ENCODE measurements at regions of chr17 and their contacts with region 1.

Region 1: DNA sequence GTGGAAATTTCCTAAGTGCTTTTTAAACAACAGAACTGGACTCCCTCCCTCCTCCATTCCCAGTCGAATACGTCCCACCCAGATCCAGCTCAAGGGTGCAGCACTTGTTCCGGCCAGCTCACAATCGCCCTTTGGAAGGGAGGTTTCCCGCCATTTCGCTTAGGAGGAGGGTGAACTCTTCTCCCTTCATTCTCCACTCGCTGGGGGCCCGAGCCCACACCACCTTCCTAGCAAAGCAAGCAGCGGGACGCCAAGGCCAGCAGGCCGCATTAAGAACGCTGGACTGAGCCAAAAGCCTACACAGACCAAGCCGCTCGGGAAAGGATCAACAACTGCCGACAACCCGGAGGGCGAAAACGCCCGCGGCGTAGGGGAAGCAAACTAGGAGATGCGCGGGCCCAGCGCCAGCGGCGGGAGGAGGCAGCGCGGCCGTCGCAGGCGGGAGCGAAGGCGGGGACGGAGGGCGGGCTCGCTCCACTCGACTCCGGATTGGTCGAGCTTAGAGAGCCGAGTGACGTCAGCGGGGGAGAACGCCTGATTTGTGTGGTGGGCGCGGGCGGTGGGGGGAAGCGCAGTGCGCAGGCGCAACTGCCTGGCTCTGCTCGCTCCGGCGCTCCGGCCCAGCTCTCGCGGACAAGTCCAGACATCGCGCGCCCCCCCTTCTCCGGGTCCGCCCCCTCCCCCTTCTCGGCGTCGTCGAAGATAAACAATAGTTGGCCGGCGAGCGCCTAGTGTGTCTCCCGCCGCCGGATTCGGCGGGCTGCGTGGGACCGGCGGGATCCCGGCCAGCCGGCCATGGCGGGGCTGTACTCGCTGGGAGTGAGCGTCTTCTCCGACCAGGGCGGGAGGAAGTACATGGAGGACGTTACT is at the start of gene PPM1D:
- DNase-seq: peak; percentile 97 to 100
- ATAC-seq: peak; percentile 91 to 99 (median 94)
- H3K4me3 ChIP-seq: peak within 1 kb of the TSS; percentile 94
- H3K4me3 Mint-ChIP-seq: peak within 1 kb of the TSS; percentile 95
- H3K27ac ChIP-seq: peak within 1 kb of the TSS; percentile 90
- H3K27ac Mint-ChIP-seq: peak within 1 kb of the TSS; percentile 90 to 99
- H3K4me1 ChIP-seq: peaks cover 17% of the 10 kb centered on the region
- H3K4me1 Mint-ChIP-seq: peaks cover 42 to 48% of the 10 kb centered on the region in 2 donors
- H3K27me3 ChIP-seq: no peaks in the 10 kb centered on the region
- H3K27me3 Mint-ChIP-seq: peaks cover 0 to 7% of the 10 kb centered on the region in 2 donors
- CTCF ChIP-seq: no peak
- total RNA-seq, gene PPM1D: 22.8 to 31.6 (median 27.9) TPM

Region 2: DNA sequence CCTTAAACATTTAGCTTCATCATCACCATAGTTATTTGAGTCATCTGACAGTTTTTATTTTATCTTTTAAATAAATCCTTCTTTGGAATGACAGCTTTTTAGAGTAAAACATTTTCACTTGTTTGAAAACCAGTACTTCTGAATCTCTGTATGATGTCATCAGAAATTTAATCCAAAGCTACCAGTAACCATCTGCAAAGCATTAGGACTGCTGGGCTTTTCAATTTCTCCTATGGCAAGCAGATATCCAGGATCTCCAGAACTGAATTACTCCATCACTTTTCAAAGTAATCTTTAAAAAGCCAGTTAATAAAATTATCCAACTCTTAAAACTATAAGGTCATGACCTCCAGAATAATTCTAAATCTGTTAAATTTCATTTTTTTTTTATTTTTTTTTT is 126.1 kb before region 1 on chr17:
- intact Hi-C with region 1: no loop called
- DNase-seq: no peak
- ATAC-seq: no peak
- H3K4me3 ChIP-seq: no peak overlapping the region
- H3K4me3 Mint-ChIP-seq: no peak overlapping the region
- H3K27ac ChIP-seq: no peak overlapping the region
- H3K27ac Mint-ChIP-seq: no peak overlapping the region
- H3K4me1 ChIP-seq: no peaks in the 10 kb centered on the region
- H3K4me1 Mint-ChIP-seq: peaks cover 6 to 7% of the 10 kb centered on the region in 2 donors
- H3K27me3 ChIP-seq: no peaks in the 10 kb centered on the region
- H3K27me3 Mint-ChIP-seq: no peaks in the 10 kb centered on the region
- CTCF ChIP-seq: no peak

Region 3: GRCh38 chr17:60525685-60526514 is 74.0 kb before region 1 on chr17 and contains the start of gene APPBP2:
- intact Hi-C with region 1: loop called (anchors 2 kb)
- DNase-seq: peak; percentile 70 to 88
- ATAC-seq: peak; percentile 85 to 91 (median 86)
- H3K4me3 ChIP-seq: peak within 1 kb of the TSS; percentile 81
- H3K4me3 Mint-ChIP-seq: peak within 1 kb of the TSS; percentile 95
- H3K27ac ChIP-seq: peak within 1 kb of the TSS; percentile 91
- H3K27ac Mint-ChIP-seq: peak within 1 kb of the TSS; percentile 93 to 98
- H3K4me1 ChIP-seq: peaks cover 10% of the 10 kb centered on the region
- H3K4me1 Mint-ChIP-seq: peaks cover 38 to 45% of the 10 kb centered on the region in 2 donors
- H3K27me3 ChIP-seq: no peaks in the 10 kb centered on the region
- H3K27me3 Mint-ChIP-seq: no peaks in the 10 kb centered on the region
- CTCF ChIP-seq: no peak
- total RNA-seq, gene APPBP2: 18.2 to 23.2 (median 23.0) TPM

Region 4: GRCh38 chr17:60639019-60639330 is 39.1 kb after region 1 on chr17:
- intact Hi-C with region 1: loop called (anchors 5 kb)
- DNase-seq: no peak
- ATAC-seq: no peak
- H3K4me3 ChIP-seq: no peak overlapping the region
- H3K4me3 Mint-ChIP-seq: no peak overlapping the region
- H3K27ac ChIP-seq: no peak overlapping the region
- H3K27ac Mint-ChIP-seq: no peak overlapping the region
- H3K4me1 ChIP-seq: no peaks in the 10 kb centered on the region
- H3K4me1 Mint-ChIP-seq: peaks cover 0 to 9% of the 10 kb centered on the region in 2 donors
- H3K27me3 ChIP-seq: no peaks in the 10 kb centered on the region
- H3K27me3 Mint-ChIP-seq: no peaks in the 10 kb centered on the region
- CTCF ChIP-seq: peak; percentile 34

Region 5: DNA sequence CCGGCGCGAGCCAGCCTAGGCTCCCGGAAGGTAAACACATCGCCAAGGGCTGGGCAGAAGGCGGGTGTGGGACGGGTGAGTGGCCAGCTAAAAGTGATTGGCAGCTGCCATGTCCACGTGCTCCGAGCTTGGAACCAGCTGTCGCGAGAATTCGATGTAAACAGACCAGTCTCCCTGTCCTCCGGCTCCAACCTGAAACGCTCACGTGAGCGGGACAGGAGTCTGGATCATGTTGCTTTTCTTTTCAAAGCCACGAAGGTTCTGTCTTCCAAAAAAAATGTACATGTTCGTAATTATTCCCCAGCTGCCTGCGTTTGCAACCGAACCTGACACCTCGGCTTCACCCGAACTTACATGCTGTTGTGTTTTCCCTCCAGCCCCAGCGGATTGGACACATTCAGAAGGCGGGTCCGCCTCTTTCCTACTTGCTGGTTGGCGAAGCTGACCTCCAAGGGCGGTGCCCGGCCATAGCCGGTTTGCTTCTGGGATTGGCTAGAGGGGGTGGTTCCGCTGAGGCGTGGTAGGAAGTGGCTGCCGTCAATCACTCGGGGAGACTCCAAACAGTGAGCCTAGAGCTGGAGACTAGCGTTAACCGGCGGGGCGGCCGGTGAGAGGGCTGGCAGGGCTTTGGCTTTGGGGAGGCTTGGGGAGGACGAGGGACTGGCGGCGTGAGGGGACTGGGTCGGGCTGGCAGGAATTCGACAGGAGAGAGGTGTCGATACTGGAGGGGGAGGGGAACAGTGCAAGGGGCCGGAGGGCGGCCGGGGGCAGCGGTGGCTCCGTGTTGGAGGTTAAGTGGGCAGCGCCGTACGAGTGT is 77.7 kb after region 1 on chr17 and contains the start of gene BCAS3:
- intact Hi-C with region 1: loop called (anchors 2 kb)
- DNase-seq: peak; percentile 93 to 98
- ATAC-seq: peak; percentile 92 to 98 (median 93)
- H3K4me3 ChIP-seq: peak within 1 kb of the TSS; percentile 92
- H3K4me3 Mint-ChIP-seq: peak within 1 kb of the TSS; percentile 96
- H3K27ac ChIP-seq: peak within 1 kb of the TSS; percentile 83
- H3K27ac Mint-ChIP-seq: peak within 1 kb of the TSS; percentile 97 to 100
- H3K4me1 ChIP-seq: peaks cover 10% of the 10 kb centered on the region
- H3K4me1 Mint-ChIP-seq: peaks cover 20 to 31% of the 10 kb centered on the region in 2 donors
- H3K27me3 ChIP-seq: no peaks in the 10 kb centered on the region
- H3K27me3 Mint-ChIP-seq: no peaks in the 10 kb centered on the region
- CTCF ChIP-seq: no peak
- total RNA-seq, gene BCAS3: 60.5 to 87.8 (median 72.0) TPM

Measured in natural killer cell (primary cell).